Endothelial cell of umbilical vein (primary cell): ENCODE measurements at regions of chr18 and their contacts with region 1.

Region 1: DNA sequence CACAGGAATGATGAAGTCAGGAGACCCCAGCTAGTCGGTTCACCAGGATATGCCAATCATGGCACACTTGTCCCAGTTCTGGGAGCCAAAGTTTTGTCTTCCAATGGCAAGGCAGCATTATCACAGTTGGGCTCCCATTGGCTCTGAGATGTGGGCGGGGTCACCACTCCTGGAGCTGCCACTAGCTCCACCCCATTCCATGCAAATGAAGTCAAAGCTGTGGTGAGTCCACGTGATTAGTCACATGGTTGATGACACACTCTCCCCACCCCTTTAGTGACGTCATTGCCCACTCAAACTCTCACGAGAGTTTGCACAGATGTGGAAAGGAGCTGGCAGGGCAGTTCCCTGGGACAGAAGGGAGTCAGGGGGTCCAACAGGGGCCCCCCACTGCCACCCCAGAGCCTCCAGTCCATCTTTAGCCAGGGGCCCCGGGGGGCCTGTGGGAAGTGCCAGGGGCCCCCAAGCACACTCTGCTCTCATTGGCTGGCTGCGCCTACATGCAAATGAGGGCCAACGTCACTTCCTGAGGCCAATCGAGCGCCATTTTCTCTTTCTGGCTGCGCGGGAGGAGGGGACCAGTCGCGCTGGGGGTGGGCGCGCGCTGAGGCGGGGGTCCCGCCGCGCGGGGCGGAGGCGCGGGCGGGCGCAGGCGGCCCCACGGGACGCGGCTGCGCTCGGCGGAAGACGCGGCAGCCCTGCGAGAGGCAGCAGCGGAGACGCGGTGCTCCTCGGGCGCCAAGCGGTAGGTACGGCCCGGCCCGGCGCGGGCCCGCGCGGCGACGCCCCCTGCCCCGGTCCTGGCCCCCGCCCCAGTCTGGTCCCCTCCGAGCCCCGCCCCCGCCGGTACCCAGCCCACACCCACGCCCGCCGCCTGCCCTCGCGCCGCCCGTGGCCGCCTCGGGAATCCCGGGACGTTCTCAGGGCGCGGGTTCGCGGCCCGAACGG is at the start of gene ADNP2:
- DNase-seq: peak; percentile 97
- H3K4me3 ChIP-seq: peak within 1 kb of the TSS; percentile 58 to 94 (median 86)
- H3K27ac ChIP-seq: peak within 1 kb of the TSS; percentile 54
- H3K4me1 ChIP-seq: peaks cover 8% of the 10 kb centered on the region
- H3K27me3 ChIP-seq: peaks cover 0 to 6% of the 10 kb centered on the region in 2 experiments
- CTCF ChIP-seq: no peak
- POLR2A ChIP-seq: no peak
- total RNA-seq, gene ADNP2: 19.8 and 20.6 TPM in 2 replicates

Region 2: GRCh38 chr18:79679111-79679872 is 429.7 kb before region 1 on chr18 and contains the start of gene CTDP1:
- CTCF ChIA-PET with region 1: no interaction called
- POLR2A ChIA-PET with region 1: no interaction called
- dilution Hi-C with region 1: no loop called
- intact Hi-C with region 1: loop called (anchors 2 kb)
- DNase-seq: peak; percentile 99
- H3K4me3 ChIP-seq: peak within 1 kb of the TSS; percentile 82 to 99 (median 83)
- H3K27ac ChIP-seq: peak within 1 kb of the TSS; percentile 73
- H3K4me1 ChIP-seq: peaks cover 16% of the 10 kb centered on the region
- H3K27me3 ChIP-seq: no peaks in the 10 kb centered on the region
- CTCF ChIP-seq: no peak
- POLR2A ChIP-seq: peak; percentile 25
- total RNA-seq, gene CTDP1: 23.5 and 27.6 TPM in 2 replicates

Region 3: DNA sequence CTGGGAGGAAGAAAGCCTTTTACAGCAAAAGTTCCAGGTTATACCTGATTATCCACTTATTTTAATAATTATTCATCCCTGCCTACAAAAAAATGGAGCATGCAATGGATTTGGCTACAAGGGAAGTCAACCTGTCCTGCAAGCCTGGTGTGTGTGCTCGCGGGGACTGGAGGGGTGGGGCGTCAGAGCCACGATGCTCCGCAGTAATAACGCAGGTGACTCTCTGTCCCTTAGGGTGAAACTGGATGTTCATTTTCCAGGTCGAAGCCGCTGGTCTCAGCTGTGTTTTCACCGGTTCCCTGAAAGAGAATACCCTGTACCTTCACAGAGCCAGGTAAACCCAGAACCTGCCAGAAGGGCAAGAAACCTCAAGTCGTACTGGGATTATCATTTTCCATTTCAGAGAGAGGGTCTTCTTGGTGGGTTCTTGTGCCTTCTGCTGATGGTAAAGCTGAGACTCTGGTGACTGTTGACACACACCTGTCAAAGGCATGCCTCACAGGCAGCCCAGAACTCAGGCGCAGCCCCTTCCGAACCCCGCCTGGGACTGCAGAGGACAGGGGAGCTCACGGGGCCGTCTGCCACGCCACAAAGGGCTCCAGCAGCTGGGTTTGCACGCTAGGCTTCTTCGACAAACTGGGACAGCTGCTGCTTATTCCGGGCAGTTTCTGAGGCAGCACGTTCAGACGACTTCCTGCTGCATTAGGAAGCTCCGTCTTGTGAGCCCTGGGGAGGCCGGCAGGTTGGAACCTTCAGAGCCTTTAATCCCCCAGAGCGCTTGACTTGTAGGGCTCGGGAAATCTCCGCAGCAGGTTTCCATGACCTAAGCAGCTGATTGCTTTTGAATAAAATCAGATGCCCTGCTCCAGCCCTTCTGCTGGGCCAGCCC is 252.6 kb before region 1 on chr18:
- CTCF ChIA-PET with region 1: no interaction called
- POLR2A ChIA-PET with region 1: no interaction called
- dilution Hi-C with region 1: no loop called
- intact Hi-C with region 1: no loop called
- DNase-seq: no peak
- H3K4me3 ChIP-seq: no peak overlapping the region
- H3K27ac ChIP-seq: no peak overlapping the region
- H3K4me1 ChIP-seq: no peaks in the 10 kb centered on the region
- H3K27me3 ChIP-seq: no peaks in the 10 kb centered on the region
- CTCF ChIP-seq: no peak
- POLR2A ChIP-seq: no peak

Region 4: GRCh38 chr18:80034068-80034851 is 74.7 kb before region 1 on chr18 and contains the start of gene RBFA:
- CTCF ChIA-PET with region 1: interaction called, 7 read pairs
- POLR2A ChIA-PET with region 1: interaction called, 9 read pairs
- dilution Hi-C with region 1: no loop called
- intact Hi-C with region 1: loop called (anchors 1 kb)
- DNase-seq: peak; percentile 99
- H3K4me3 ChIP-seq: peak within 1 kb of the TSS; percentile 94 to 97 (median 96)
- H3K27ac ChIP-seq: peak within 1 kb of the TSS; percentile 39
- H3K4me1 ChIP-seq: peaks cover 9% of the 10 kb centered on the region
- H3K27me3 ChIP-seq: no peaks in the 10 kb centered on the region
- CTCF ChIP-seq: peak; percentile 32 to 49
- POLR2A ChIP-seq: peak; percentile 85
- total RNA-seq, gene RBFA: 30.5 and 34.8 TPM in 2 replicates

Region 5: GRCh38 chr18:80147418-80148325 is 38.7 kb after region 1 on chr18:
- CTCF ChIA-PET with region 1: no interaction called
- POLR2A ChIA-PET with region 1: no interaction called
- dilution Hi-C with region 1: no loop called
- intact Hi-C with region 1: loop called (anchors 5 kb)
- DNase-seq: peak; percentile 76
- H3K4me3 ChIP-seq: peak overlapping the region; percentile 59 to 79 (median 69)
- H3K27ac ChIP-seq: no peak overlapping the region
- H3K4me1 ChIP-seq: peaks cover 8% of the 10 kb centered on the region
- H3K27me3 ChIP-seq: no peaks in the 10 kb centered on the region
- CTCF ChIP-seq: no peak
- POLR2A ChIP-seq: no peak